OCI-LY7 (cell line): ENCODE measurements at regions of chr2 and their contacts with region 1.

Region 1: DNA sequence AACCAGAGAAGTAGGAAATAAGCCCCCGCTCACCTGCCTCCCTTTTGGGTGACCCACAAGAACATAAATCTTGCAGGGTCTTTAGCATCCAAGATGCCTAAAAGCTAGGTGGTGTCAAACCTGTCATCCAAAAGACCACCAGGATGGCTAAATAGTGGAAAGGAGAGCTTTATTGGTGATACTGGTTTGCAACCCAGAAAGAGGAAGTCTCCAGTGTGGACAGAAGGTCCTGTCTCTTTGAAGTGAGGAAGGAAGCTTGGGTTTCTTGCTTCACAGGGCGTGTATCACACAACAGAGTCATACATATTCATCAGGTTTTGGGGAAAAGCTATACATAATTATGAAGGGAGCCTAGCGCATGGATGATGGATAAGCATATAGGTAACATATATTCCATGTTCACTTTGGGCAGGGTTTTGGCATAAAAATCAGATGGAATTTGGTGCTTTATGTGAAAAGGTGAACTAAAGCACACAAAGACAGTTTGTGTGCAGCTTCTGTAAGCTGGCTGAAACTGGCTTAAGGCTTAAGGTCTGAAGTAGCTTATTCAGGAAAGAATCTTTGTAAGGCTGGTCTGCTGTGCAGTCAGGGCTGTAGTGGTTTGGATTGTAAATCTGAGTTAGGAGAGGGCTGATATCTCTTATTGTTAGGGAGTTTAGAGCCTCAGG is 102.2 kb upstream of the MSH2 start:
- DNase-seq: peak; percentile 66
- H3K4me3 ChIP-seq: no peak overlapping the region
- H3K27ac ChIP-seq: no peak overlapping the region
- H3K4me1 ChIP-seq: peaks cover 14% of the 10 kb centered on the region
- CTCF ChIP-seq: no peak

Region 2: GRCh38 chr2:47086054-47086471 is 214.7 kb before region 1 on chr2:
- CTCF ChIA-PET with region 1: no interaction called
- POLR2A ChIA-PET with region 1: interaction called, 10 read pairs
- intact Hi-C with region 1: no loop called
- DNase-seq: no peak
- H3K4me3 ChIP-seq: no peak overlapping the region
- H3K27ac ChIP-seq: no peak overlapping the region
- H3K4me1 ChIP-seq: no peaks in the 10 kb centered on the region
- CTCF ChIP-seq: no peak

Region 3: DNA sequence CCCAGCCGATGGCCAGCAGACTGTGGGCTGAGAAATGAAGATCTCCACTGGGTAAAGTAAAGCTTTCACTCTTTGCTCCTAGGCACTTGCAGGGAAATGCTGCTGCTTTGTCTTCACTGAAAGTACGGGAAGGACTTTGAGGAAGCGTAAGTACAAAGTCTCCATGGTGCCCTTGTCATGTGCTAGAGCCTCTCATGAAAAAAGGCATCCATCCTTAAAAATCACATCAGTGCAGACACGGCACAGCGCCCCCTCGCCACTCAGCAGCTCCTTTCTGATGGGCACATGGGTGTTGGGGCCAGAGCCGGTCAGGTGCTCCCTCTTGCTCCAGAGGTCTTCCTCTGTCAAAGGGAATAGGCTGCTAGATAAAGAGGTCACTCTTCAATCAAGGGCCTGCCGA is 36.6 kb before region 1 on chr2:
- CTCF ChIA-PET with region 1: no interaction called
- POLR2A ChIA-PET with region 1: no interaction called
- intact Hi-C with region 1: no loop called
- DNase-seq: peak; percentile 10
- H3K4me3 ChIP-seq: no peak overlapping the region
- H3K27ac ChIP-seq: no peak overlapping the region
- H3K4me1 ChIP-seq: no peaks in the 10 kb centered on the region
- CTCF ChIP-seq: peak; percentile 66

Region 4: DNA sequence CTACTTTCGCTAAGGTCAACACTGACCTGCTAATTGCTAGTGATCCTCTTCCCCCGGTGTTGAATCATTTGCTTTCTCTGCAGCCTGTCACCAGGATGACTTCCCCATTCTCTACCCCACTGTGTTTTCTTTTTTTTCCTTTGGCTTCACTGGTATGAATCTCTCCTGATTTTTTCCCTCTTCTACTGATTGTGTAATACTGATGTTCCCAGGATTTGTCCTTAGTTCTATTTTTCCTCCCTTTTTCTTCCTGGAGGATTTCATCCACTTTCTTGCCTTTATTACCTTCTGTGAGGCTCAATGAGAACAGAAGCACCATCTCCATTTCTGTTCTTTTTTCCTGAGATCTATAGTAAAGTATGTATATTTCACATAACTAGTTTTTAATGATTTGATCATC is 88.1 kb after region 1 on chr2:
- CTCF ChIA-PET with region 1: no interaction called
- POLR2A ChIA-PET with region 1: interaction called, 10 read pairs
- intact Hi-C with region 1: no loop called
- DNase-seq: no peak
- H3K4me3 ChIP-seq: no peak overlapping the region
- H3K27ac ChIP-seq: no peak overlapping the region
- H3K4me1 ChIP-seq: no peaks in the 10 kb centered on the region
- CTCF ChIP-seq: no peak